Activated CD8-positive, alpha-beta T cell treated with anti-CD3 and anti-CD28 coated beads for 36 hours (primary cell): ENCODE measurements at regions of chr9 and their contacts with region 1.

Region 1: GRCh38 chr9:127785023-127785932 is 556 bp upstream of the CDK9 start:
- DNase-seq: peak; percentile 90
- ATAC-seq: peak; percentile 37
- H3K4me3 Mint-ChIP-seq: peak overlapping the region; percentile 97
- H3K27ac Mint-ChIP-seq: peak overlapping the region; percentile 95
- H3K4me1 Mint-ChIP-seq: peaks cover 72% of the 10 kb centered on the region
- H3K27me3 Mint-ChIP-seq: no peaks in the 10 kb centered on the region
- CTCF ChIP-seq: peak; percentile 86

Region 2: DNA sequence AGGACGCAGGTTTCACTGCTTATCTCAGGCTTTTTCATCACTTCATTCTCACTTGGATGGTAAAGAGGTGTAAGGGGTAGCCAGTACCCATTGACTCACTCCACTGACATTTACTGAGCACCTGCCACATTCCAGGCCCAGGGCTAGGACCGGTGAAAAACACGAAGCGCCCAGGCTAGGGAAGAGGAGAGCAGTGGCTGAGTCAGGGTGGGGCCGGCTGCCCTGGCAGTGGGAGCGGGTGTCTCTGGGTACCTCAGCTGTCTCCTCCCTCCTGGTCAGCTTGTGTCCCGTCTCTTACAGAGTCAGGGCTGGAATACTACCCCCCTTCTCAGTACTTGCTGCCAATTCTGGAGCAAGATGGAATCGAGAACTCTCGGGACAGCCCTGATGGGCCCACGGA is 311.8 kb before region 1 on chr9:
- CTCF ChIA-PET with region 1: no interaction called
- POLR2A ChIA-PET with region 1: no interaction called
- intact Hi-C with region 1: no loop called
- DNase-seq: no peak
- ATAC-seq: no peak
- H3K4me3 Mint-ChIP-seq: no peak overlapping the region
- H3K27ac Mint-ChIP-seq: no peak overlapping the region
- H3K4me1 Mint-ChIP-seq: no peaks in the 10 kb centered on the region
- H3K27me3 Mint-ChIP-seq: no peaks in the 10 kb centered on the region
- CTCF ChIP-seq: no peak

Region 3: DNA sequence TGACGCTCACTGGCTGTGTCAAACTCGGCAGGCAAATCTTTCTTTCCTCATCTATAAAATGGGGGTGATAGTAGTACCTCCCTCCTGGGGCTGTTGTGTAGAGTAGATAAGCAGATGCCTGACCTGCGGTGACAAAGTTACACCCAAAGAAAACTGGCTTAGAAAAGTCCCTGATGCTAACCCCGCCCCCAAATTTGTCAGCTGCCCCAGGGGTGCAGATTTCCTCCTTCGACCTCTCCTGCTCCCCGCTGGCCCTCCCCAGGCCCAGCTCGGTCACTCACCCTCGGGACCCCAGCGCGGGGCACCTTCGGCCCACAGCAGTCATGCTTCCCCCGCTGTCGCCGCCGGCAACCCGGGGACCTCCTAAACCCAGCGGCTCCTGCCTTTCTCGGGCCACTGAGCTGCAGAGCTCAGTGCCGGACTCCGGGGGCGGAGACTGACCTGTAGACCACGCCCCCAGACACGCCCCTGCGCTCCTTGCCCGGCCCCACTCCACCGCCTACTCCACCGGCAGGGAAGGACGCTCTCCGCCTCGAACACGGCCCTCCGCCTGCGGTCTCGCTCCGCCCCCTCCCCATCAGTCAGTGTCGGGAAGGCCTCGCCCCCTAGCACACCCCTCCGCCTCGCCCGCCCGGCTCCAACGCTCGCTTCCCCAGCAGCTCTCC is 14.2 kb before region 1 on chr9:
- CTCF ChIA-PET with region 1: interaction called, 144 read pairs
- POLR2A ChIA-PET with region 1: interaction called, 56 read pairs
- intact Hi-C with region 1: no loop called
- DNase-seq: peak; percentile 99
- ATAC-seq: peak; percentile 93
- H3K4me3 Mint-ChIP-seq: peak overlapping the region; percentile 83
- H3K27ac Mint-ChIP-seq: peak overlapping the region; percentile 87
- H3K4me1 Mint-ChIP-seq: peaks cover 62% of the 10 kb centered on the region
- H3K27me3 Mint-ChIP-seq: no peaks in the 10 kb centered on the region
- CTCF ChIP-seq: no peak

Region 4: GRCh38 chr9:127796225-127796813 is 11.0 kb after region 1 on chr9:
- CTCF ChIA-PET with region 1: interaction called, 4 read pairs
- POLR2A ChIA-PET with region 1: interaction called, 28 read pairs
- intact Hi-C with region 1: no loop called
- DNase-seq: no peak
- ATAC-seq: peak; percentile 45
- H3K4me3 Mint-ChIP-seq: no peak overlapping the region
- H3K27ac Mint-ChIP-seq: peak overlapping the region; percentile 81
- H3K4me1 Mint-ChIP-seq: peaks cover 24% of the 10 kb centered on the region
- H3K27me3 Mint-ChIP-seq: no peaks in the 10 kb centered on the region
- CTCF ChIP-seq: no peak

Region 5: DNA sequence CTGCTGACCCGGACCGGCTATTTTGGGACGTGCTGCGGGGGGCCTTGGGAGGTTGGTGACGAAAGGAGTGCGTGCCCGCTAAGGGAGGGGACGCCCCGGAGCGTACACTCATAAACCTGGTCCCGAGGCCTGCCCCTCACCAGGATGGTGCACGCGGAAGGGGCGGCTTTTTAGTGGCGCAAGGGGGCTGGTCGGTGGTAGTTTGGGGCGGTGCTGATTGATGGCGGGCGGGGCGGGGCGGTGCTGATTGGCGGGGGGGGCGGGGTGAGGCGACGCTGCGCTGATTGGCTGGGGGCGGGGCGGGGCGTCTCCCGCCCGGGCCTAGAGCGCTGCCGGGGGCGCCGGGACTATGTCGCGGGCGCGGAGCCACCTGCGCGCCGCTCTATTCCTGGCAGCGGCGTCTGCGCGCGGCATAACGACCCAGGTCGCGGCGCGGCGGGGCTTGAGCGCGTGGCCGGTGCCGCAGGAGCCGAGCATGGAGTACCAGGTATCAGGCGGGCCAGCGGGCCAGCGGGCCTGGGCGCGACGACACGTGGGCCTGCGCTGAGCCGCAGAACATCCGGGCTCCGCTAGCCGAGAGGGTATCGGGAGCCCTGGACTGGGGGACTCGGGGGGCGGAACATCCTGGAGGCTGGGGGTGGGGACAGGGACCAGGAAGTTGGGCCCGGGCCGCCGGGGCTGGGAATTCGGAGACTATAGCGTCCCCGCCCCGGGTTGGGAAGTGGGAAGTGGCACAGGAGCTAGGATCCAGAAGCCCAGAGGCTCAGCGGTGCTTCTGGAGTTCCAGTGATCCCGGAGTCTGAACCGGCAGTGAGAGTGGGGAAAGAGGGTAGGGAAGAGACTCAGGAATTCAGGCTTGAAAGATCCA is 17.5 kb after region 1 on chr9 and contains the start of gene FPGS:
- CTCF ChIA-PET with region 1: interaction called, 4 read pairs
- POLR2A ChIA-PET with region 1: interaction called, 28 read pairs
- intact Hi-C with region 1: no loop called
- DNase-seq: peak; percentile 92
- ATAC-seq: peak; percentile 87
- H3K4me3 Mint-ChIP-seq: peak within 1 kb of the TSS; percentile 99
- H3K27ac Mint-ChIP-seq: peak within 1 kb of the TSS; percentile 97
- H3K4me1 Mint-ChIP-seq: peaks cover 26% of the 10 kb centered on the region
- H3K27me3 Mint-ChIP-seq: no peaks in the 10 kb centered on the region
- CTCF ChIP-seq: no peak
- total RNA-seq, gene FPGS: 79.8 to 80.4 TPM

Region 6: GRCh38 chr9:127887792-127888191 is 102.5 kb after region 1 on chr9:
- CTCF ChIA-PET with region 1: no interaction called
- POLR2A ChIA-PET with region 1: no interaction called
- intact Hi-C with region 1: no loop called
- DNase-seq: no peak
- ATAC-seq: peak; percentile 43
- H3K4me3 Mint-ChIP-seq: no peak overlapping the region
- H3K27ac Mint-ChIP-seq: no peak overlapping the region
- H3K4me1 Mint-ChIP-seq: peaks cover 5% of the 10 kb centered on the region
- H3K27me3 Mint-ChIP-seq: no peaks in the 10 kb centered on the region
- CTCF ChIP-seq: peak; percentile 28